Gastrocnemius medialis (tissue), 4 donors: ENCODE measurements at regions of chr18 and their contacts with region 1.

Region 1: DNA sequence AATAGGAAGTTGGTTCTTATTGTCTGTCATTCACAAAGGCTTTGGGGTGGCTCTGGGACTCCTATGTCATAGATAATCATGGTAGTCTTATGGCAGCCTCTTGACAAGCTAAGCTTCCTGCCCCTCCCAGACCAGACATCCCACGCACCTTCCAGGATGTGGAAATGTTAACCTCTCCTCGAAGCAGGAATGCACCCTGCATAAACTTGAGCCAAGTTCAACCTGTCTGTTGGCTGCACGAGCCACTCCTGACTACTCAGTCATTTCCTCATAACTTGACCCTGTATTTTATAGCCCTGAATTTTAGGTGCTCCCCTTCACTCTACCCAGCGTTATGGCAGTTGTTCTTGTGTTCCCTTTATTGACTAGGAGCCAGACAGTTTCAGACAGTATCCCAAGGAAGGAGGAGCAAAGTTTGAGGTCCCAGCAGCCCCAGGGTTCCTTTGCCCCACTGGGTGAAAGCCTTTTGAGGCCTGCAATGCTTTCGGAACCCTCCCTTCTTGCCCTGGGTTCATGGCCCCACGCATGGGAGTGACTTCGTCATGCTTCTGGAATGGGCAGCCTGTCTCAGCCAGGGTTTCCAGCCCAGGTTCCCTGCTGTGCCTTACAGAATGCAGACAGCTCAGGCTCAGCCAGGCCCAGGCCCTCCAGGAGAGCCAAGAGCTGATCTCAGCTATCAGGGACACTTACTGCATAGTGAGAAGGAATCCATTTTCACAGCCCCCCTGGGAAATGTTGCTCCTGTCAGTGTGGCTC is 15.6 kb upstream of the INO80C start:
- DNase-seq: peak in 1 of 2 donors; percentile 59
- ATAC-seq: peak; percentile 39 to 80
- H3K4me3 ChIP-seq: no peak overlapping the region
- H3K27ac ChIP-seq: peak overlapping the region; percentile 46 to 80 (median 66)
- H3K4me1 ChIP-seq: peaks cover 26 to 42% of the 10 kb centered on the region in 2 donors
- H3K27me3 ChIP-seq: no peaks in the 10 kb centered on the region
- CTCF ChIP-seq: no peak
- POLR2A ChIP-seq: no peak

Region 2: DNA sequence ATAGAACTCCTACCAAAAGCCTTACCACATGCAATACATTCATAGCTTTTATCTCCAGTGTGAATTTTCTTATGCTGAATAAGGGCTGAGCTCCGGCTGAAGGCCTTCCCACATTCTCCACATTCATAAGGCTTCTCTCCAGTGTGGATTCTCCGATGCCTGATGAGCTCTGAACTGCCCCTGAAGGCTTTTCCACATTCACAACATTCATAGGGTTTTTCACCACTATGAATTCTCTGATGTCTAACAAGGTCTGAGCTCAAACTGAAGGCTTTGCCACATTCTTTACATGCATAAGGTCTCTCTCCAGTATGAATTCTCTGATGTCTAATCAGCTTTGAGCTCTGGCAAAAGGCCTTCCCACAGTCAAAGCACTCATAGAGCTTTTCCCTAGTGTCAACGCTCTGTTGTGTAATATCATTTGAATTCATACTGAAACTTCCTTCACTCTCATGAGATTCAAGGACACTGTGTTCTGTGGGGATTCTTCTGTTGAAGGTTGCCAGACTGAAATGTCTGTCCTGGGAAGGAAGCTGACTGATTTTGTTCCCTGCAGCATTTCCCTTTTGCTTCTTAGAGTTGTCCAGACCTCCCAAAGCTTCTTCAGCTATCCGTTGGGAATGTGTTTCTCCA is 259.6 kb before region 1 on chr18:
- in situ Hi-C with region 1: no loop called
- intact Hi-C with region 1: no loop called
- DNase-seq: no peak
- ATAC-seq: no peak
- H3K4me3 ChIP-seq: no peak overlapping the region
- H3K27ac ChIP-seq: no peak overlapping the region
- H3K4me1 ChIP-seq: no peaks in the 10 kb centered on the region
- H3K27me3 ChIP-seq: no peaks in the 10 kb centered on the region
- CTCF ChIP-seq: no peak
- POLR2A ChIP-seq: no peak

Region 3: DNA sequence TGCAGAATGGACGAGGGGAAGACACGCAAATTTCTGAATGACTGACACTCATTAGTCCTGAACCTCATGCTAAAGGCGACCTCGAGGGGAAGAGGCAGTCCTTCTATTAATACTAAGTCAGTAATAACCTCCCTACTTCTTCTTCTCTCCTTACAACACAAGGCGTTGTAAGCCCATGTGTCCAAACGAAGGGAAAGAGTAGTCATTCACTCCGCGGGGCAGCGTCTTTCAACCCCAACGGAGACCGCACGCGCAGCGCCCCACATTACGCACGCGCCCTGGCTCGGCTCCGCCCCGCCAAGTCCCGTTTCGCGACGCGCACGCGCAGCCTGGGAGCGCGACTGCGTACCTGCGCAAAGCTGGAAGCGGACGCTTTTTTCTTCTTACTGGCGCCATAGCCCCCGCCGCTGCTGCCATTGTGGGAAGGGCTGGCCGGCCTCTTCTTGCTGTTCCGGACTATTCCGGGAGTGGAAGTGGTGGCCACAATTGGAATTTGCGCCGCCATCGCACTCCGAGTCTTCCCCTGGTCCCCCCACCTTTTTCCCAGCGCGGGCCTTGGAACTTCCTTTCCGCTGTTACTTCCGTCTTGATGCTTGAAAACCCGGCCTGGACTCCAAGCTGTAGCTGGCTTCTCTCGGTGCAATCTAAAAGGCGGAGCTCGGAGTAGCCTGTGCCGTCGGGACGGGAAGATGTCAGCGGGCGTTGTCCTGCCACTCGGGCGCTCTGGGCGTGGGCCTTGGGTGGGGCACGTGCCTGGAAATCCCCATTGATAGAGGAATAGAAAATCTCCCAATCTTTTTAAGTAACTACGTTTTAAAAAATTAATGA is 15.8 kb before region 1 on chr18 and contains the start of gene INO80C:
- in situ Hi-C with region 1: no loop called
- intact Hi-C with region 1: loop called (anchors 2 kb)
- DNase-seq: peak; percentile 86 to 89
- ATAC-seq: peak; percentile 98
- H3K4me3 ChIP-seq: peak within 1 kb of the TSS; percentile 73 to 93 (median 82)
- H3K27ac ChIP-seq: peak within 1 kb of the TSS; percentile 93 to 99 (median 94)
- H3K4me1 ChIP-seq: peaks cover 13 to 26% of the 10 kb centered on the region in 2 donors
- H3K27me3 ChIP-seq: no peaks in the 10 kb centered on the region
- CTCF ChIP-seq: peak in 2 of 5 experiments; percentile 29 to 44
- POLR2A ChIP-seq: peak; percentile 79 to 82
- total RNA-seq, gene INO80C: 5.3 to 6.4 (median 5.5) TPM

Region 4: DNA sequence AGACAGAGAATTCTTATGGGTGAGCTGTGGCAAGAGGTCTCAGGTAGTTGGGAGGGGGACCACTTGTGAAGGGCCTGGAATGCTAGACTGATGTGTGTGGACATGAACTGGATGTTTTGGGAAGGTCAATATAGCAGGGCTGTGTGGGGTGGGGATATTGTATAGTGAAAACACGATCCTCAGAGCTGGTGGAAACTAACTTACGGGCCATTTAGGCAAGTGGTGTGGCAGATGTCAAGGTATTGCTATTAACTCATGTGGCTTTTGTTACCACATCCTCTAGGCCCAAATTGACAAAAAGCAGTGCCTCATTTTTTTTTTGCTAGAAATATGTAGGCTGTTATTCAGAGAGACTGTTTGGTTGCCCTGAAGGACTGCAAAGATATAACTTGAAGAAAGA is 60.2 kb after region 1 on chr18:
- in situ Hi-C with region 1: no loop called
- intact Hi-C with region 1: loop called (anchors 5 kb)
- DNase-seq: no peak
- ATAC-seq: no peak
- H3K4me3 ChIP-seq: no peak overlapping the region
- H3K27ac ChIP-seq: peak overlapping the region; percentile 32 to 72 (median 62)
- H3K4me1 ChIP-seq: peaks cover 6 to 14% of the 10 kb centered on the region in 2 donors
- H3K27me3 ChIP-seq: no peaks in the 10 kb centered on the region
- CTCF ChIP-seq: no peak
- POLR2A ChIP-seq: no peak